ENCODE measurements at regions of chr10 and their contacts with region 1.

Region 1: DNA sequence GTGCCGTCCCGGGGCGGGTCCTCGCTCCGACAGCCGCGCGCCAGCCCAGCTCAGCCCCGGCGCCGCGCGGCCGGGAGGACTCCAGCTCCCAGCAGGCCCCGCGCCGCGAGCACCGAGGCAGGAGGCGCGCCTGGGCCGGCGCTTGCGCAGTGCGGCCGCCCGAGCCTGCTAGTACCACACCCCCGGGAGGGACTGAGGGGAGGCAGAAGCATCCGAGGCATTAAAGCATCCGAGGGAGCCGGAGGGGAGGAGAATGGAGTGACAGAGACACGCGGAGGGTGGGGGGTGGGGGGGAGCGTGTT is at the start of gene GRK5:
- DNase-seq: peak; percentile 93 to 96
- H3K4me3 ChIP-seq: peak within 1 kb of the TSS; percentile 75
- H3K4me3 Mint-ChIP-seq: peak within 1 kb of the TSS; percentile 81
- H3K27ac Mint-ChIP-seq: peak within 1 kb of the TSS; percentile 84
- H3K4me1 ChIP-seq: peaks cover 16% of the 10 kb centered on the region
- H3K4me1 Mint-ChIP-seq: peaks cover 17% of the 10 kb centered on the region
- H3K27me3 ChIP-seq: no peaks in the 10 kb centered on the region
- H3K27me3 Mint-ChIP-seq: no peaks in the 10 kb centered on the region
- CTCF ChIP-seq: no peak
- total RNA-seq, gene GRK5: 7.7 and 8.9 TPM in 2 replicates

Region 2: GRCh38 chr10:118892255-118892654 is 315.1 kb before region 1 on chr10:
- CTCF ChIA-PET with region 1: no interaction called
- POLR2A ChIA-PET with region 1: no interaction called
- intact Hi-C with region 1: no loop called
- DNase-seq: no peak
- H3K4me3 ChIP-seq: no peak overlapping the region
- H3K4me3 Mint-ChIP-seq: no peak overlapping the region
- H3K27ac Mint-ChIP-seq: no peak overlapping the region
- H3K4me1 ChIP-seq: no peaks in the 10 kb centered on the region
- H3K4me1 Mint-ChIP-seq: no peaks in the 10 kb centered on the region
- H3K27me3 ChIP-seq: no peaks in the 10 kb centered on the region
- H3K27me3 Mint-ChIP-seq: peaks cover 8% of the 10 kb centered on the region
- CTCF ChIP-seq: no peak

Region 3: DNA sequence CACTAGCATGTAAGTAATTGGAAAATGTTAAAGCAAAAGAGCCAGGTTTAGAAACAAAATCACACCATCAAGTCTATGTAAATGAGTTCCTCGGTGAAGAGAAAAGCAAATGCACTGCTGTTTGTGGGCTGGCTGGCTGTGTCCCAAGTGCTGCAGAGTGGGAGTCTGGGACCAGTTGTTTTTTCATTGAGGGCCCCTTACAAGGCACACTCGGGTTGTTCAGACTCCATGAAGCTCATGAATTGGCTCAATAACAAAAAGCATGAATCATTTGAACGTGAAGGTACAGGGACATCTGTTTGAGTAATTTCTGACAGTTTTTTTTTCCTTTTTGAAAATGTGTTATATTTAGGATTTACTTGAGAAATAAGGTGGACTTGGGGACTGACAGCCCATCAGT is 28.0 kb after region 1 on chr10:
- CTCF ChIA-PET with region 1: no interaction called
- POLR2A ChIA-PET with region 1: interaction called, 4 read pairs
- intact Hi-C with region 1: loop called (anchors 1 kb)
- DNase-seq: no peak
- H3K4me3 ChIP-seq: no peak overlapping the region
- H3K4me3 Mint-ChIP-seq: no peak overlapping the region
- H3K27ac Mint-ChIP-seq: no peak overlapping the region
- H3K4me1 ChIP-seq: peaks cover 25% of the 10 kb centered on the region
- H3K4me1 Mint-ChIP-seq: peaks cover 20% of the 10 kb centered on the region
- H3K27me3 ChIP-seq: no peaks in the 10 kb centered on the region
- H3K27me3 Mint-ChIP-seq: no peaks in the 10 kb centered on the region
- CTCF ChIP-seq: no peak

Region 4: GRCh38 chr10:119253433-119254174 is 46.3 kb after region 1 on chr10:
- CTCF ChIA-PET with region 1: interaction called, 21 read pairs
- POLR2A ChIA-PET with region 1: interaction called, 9 read pairs
- intact Hi-C with region 1: loop called (anchors 2 kb)
- DNase-seq: peak; percentile 82 to 88
- H3K4me3 ChIP-seq: no peak overlapping the region
- H3K4me3 Mint-ChIP-seq: peak overlapping the region; percentile 52
- H3K27ac Mint-ChIP-seq: peak overlapping the region; percentile 94
- H3K4me1 ChIP-seq: peaks cover 47% of the 10 kb centered on the region
- H3K4me1 Mint-ChIP-seq: peaks cover 35% of the 10 kb centered on the region
- H3K27me3 ChIP-seq: no peaks in the 10 kb centered on the region
- H3K27me3 Mint-ChIP-seq: no peaks in the 10 kb centered on the region
- CTCF ChIP-seq: peak in 1 of 2 experiments; percentile 26

Region 5: GRCh38 chr10:119299531-119299930 is 92.2 kb after region 1 on chr10:
- CTCF ChIA-PET with region 1: interaction called, 6 read pairs
- POLR2A ChIA-PET with region 1: interaction called, 4 read pairs
- intact Hi-C with region 1: loop called (anchors 1 kb)
- DNase-seq: no peak
- H3K4me3 ChIP-seq: no peak overlapping the region
- H3K4me3 Mint-ChIP-seq: no peak overlapping the region
- H3K27ac Mint-ChIP-seq: no peak overlapping the region
- H3K4me1 ChIP-seq: peaks cover 26% of the 10 kb centered on the region
- H3K4me1 Mint-ChIP-seq: peaks cover 10% of the 10 kb centered on the region
- H3K27me3 ChIP-seq: no peaks in the 10 kb centered on the region
- H3K27me3 Mint-ChIP-seq: no peaks in the 10 kb centered on the region
- CTCF ChIP-seq: peak in 1 of 2 experiments; percentile 17

Region 6: GRCh38 chr10:119416855-119417254 is 209.5 kb after region 1 on chr10:
- CTCF ChIA-PET with region 1: interaction called, 9 read pairs
- POLR2A ChIA-PET with region 1: no interaction called
- intact Hi-C with region 1: loop called (anchors 1 kb)
- DNase-seq: peak; percentile 68 to 72
- H3K4me3 ChIP-seq: no peak overlapping the region
- H3K4me3 Mint-ChIP-seq: no peak overlapping the region
- H3K27ac Mint-ChIP-seq: no peak overlapping the region
- H3K4me1 ChIP-seq: peaks cover 28% of the 10 kb centered on the region
- H3K4me1 Mint-ChIP-seq: peaks cover 14% of the 10 kb centered on the region
- H3K27me3 ChIP-seq: no peaks in the 10 kb centered on the region
- H3K27me3 Mint-ChIP-seq: no peaks in the 10 kb centered on the region
- CTCF ChIP-seq: peak; percentile 60 to 79

Region 7: DNA sequence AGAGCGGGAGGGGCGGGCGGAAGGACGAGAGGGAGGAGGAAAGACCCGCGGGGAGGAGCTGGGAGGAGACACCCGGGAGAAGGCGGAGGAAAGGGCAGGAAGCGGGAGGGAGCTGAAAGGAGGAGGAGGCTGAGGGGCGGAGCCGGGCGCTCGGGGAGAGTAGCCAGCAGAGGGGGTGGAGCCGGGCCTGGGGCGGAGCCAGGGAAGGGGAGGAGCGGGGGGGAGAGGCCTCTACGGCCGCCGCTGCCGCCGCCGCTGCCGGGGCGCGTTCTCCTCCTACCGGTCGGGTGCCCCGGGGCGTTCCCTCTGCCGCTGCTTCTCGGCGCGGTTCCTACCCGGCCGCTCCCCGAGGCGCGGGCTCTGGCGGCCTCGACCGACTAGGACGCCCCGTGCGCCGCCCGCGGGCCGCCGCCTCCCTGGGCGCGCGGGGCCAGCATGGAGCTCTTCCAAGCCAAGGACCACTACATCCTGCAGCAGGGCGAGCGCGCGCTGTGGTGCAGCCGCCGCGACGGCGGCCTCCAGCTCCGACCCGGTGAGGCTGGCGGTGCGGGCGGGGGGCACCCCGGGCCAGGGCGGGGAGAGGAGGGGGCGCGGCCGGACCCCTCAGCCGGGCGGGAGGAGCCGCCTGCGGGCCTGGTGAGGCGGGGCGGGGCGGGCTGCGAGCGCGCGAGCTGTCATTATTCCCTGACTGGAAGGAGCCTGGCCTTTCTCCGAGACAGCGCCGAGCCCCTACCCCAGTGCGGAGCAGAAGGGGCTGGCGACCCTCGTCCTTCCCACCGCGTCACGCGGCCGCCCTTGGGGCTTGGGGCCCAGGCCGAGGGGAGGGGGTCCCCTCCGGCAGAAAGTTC is 518.7 kb after region 1 on chr10 and contains the start of gene INPP5F:
- CTCF ChIA-PET with region 1: interaction called, 11 read pairs
- POLR2A ChIA-PET with region 1: interaction called, 4 read pairs
- intact Hi-C with region 1: no loop called
- DNase-seq: peak; percentile 100
- H3K4me3 ChIP-seq: peak within 1 kb of the TSS; percentile 82
- H3K4me3 Mint-ChIP-seq: peak within 1 kb of the TSS; percentile 91
- H3K27ac Mint-ChIP-seq: peak within 1 kb of the TSS; percentile 90
- H3K4me1 ChIP-seq: peaks cover 40% of the 10 kb centered on the region
- H3K4me1 Mint-ChIP-seq: peaks cover 47% of the 10 kb centered on the region
- H3K27me3 ChIP-seq: no peaks in the 10 kb centered on the region
- H3K27me3 Mint-ChIP-seq: no peaks in the 10 kb centered on the region
- CTCF ChIP-seq: peak in 1 of 2 experiments; percentile 24
- total RNA-seq, gene INPP5F: 26.4 and 26.9 TPM in 2 replicates

Measured in Caco-2 (cell line).